ENCODE measurements at regions of chr2 and their contacts with region 1.

Region 1: DNA sequence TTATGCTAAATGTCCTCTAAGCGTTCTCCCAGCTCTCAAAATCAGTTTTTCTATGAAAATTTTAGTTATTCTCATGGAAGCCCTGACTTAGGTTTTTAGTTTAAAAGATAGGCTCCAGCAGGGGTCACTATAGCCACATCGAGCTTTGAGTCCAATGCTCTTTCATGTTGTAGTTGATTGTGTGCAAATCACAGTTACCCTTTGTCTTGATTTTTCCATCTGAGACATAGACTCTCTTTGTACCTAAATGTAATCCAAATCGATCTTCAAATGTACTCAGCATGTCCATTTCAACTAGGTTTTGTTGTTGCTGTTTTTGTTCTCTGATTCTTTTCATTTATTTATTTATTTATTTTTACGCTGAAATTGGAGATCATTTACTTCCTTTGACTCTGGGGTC is 26.4 kb upstream of the MSTN start:
- DNase-seq: no peak

Region 2: DNA sequence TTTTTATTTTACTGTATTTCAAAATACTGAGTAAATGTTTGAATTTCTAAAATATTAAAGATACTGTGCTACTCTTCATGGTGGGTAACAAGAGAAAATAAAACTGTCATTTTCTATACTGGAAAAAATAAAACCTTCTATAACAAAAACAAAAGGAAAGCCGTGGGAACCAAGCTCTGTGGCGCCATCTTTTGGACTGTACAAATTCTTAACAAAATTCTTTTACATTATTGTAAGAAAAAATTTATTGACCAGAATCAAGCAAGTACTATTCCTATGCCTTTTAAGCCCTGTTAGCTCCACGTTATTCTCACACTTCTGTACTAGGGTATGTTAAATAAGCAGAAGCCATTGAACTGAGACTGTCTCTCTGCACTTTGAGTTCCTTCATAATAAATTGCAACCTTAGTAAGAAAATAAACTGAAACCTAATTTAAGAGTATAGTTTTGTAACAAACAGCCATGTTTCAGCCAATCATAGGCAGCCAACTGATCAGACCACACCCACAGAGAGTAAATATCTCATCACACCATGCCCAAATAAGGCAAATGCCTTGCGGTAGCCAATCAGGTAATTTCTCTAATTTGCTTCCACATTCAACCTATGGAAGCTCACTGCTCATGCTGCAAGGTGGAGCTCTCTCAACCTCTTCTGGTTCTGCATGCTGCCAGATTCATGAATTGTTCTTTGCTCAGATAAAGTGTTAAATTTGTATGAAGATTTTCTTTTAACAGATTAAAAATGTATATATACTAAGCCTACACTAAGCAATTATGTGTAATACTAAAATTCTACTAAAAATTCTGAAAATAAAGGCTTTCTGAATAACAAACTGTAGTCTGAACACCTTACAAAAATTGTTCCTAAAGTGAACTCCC is 188.6 kb after region 1 on chr2:
- intact Hi-C with region 1: loop called (anchors 2 kb)
- DNase-seq: no peak

Region 3: DNA sequence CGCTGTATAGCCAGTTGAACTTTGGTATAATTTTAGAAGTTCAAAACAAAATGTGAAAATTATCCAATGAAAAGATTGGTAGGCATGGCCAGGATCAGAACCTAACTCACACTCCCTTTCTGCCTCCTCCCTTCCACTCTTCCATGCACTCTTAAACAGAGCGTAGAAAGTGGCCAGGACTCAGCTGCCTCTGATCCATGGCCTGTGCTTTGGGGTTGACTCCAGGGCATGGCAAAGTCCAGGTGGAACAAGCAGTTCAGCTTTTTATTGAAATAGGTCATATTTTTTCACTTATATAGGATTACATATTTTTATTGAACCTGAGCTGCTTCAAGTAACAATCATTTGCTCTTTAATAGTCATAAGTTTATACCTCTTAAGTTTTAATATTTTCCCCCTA is 280.7 kb after region 1 on chr2:
- intact Hi-C with region 1: loop called (anchors 5 kb)
- DNase-seq: no peak

Region 4: GRCh38 chr2:190511104-190511503 is 422.2 kb after region 1 on chr2:
- intact Hi-C with region 1: loop called (anchors 10 kb)
- DNase-seq: no peak